BJ (cell line): ENCODE measurements at regions of chr4 and their contacts with region 1.

Region 1: DNA sequence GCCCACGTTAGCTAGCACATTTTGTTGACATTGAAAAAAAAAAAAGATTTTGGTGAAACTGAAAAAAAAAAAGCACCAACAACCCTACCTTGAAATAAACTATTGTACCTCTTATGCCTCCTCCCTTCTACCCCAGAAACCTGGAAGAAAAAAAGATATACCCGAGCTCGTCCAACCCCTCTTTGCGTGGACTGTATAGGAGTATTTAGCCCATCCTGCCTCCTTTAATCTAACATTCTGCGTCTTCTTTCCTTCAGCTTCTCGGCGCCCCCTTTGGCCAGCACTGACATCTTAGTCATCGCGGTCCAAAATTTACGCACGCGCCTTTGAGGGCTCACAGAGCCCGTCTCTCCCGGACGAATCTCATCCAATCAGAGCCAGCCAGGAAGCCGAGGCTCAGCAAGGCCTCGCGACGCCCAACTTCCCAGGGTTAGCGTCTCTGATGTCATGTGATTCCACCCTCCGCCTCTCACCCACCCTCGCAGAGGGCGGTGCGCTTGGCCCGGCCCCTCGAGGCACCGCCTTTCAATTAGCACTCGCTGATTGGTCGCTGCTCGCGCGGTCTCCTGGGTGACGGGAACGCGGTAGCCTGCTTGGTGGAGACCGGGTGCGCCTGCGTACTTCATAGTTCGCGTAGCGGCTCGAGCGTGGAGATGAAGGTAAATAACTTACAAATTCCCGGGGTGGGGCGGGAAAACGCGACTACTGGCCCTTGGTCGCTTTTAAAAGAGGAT is at the start of gene WDR19:
- DNase-seq: peak; percentile 99
- H3K4me3 ChIP-seq: peak within 1 kb of the TSS; percentile 57
- H3K27me3 ChIP-seq: no peaks in the 10 kb centered on the region
- CTCF ChIP-seq: peak; percentile 71
- polyA plus RNA-seq, gene WDR19: 21.4 and 30.2 TPM in 2 replicates

Region 2: DNA sequence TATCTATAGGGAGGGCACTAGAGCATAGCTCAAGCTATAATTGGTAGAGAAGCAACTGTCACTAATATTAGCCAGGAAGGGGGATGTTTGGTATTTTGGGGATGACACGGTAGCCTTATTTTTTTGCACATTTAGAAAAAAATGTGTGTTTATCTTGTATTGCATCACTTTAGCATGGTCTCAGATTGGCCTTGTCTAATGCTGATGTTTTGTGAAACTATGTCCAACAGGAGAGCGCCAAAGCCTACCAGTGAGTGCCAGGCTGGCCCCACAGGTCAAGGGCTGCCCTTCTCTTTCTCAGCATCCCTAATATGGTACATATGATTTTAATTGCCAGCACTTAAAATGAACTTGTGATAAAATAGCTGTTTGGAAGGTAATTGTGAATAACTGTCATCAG is 24.6 kb before region 1 on chr4:
- CTCF ChIA-PET with region 1: no interaction called
- POLR2A ChIA-PET with region 1: no interaction called
- DNase-seq: no peak
- H3K4me3 ChIP-seq: no peak overlapping the region
- H3K27me3 ChIP-seq: no peaks in the 10 kb centered on the region
- CTCF ChIP-seq: no peak

Region 3: GRCh38 chr4:39169426-39170185 is 12.5 kb before region 1 on chr4:
- CTCF ChIA-PET with region 1: interaction called, 11 read pairs
- POLR2A ChIA-PET with region 1: no interaction called
- DNase-seq: no peak
- H3K4me3 ChIP-seq: no peak overlapping the region
- H3K27me3 ChIP-seq: no peaks in the 10 kb centered on the region
- CTCF ChIP-seq: no peak

Region 4: DNA sequence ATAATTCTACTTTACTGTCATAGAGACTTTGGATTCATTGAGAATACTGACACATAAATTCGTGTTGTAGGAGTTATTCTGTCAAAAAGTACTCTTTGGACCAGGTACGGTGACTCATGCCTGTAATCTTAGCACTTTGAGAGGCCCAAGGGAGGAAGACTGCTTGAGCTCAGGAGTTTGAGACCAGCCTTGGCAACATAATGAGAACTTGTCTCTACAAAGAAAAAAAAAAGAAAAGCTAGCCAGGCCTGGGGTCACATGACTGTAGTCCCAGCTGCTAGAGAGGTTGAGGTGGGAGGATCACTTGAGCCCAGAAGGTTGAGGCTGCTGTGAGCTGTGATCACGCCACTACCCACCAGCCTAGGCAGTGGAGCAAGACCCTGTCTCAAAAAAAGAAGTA is 55.1 kb after region 1 on chr4:
- CTCF ChIA-PET with region 1: no interaction called
- POLR2A ChIA-PET with region 1: no interaction called
- DNase-seq: no peak
- H3K4me3 ChIP-seq: no peak overlapping the region
- H3K27me3 ChIP-seq: no peaks in the 10 kb centered on the region
- CTCF ChIP-seq: no peak

Region 5: DNA sequence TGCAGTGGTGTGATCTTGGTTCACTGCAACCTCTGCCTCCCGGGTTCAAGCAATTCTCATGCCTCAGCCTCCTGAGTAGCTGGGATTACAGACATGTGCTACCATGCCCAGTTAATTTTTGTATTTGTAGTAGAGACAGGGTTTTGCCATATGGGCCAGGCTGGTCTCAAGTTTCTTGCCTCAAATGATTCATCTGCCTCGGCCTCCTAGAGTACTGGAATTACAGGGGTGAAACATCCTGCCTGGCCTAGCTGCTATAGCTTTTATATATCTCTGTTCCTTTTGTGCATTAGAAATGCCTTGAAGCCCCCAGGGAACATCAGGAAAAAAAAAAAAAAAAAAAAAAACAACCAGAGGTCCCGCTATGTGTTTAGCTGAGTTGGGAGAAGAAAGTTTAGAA is 550.7 kb after region 1 on chr4:
- CTCF ChIA-PET with region 1: no interaction called
- POLR2A ChIA-PET with region 1: interaction called, 18 read pairs
- DNase-seq: peak; percentile 31
- H3K4me3 ChIP-seq: no peak overlapping the region
- H3K27me3 ChIP-seq: no peaks in the 10 kb centered on the region
- CTCF ChIP-seq: no peak